Posterior vena cava (tissue), 2 donors: ENCODE measurements at regions of chr5 and their contacts with region 1.

Region 1: DNA sequence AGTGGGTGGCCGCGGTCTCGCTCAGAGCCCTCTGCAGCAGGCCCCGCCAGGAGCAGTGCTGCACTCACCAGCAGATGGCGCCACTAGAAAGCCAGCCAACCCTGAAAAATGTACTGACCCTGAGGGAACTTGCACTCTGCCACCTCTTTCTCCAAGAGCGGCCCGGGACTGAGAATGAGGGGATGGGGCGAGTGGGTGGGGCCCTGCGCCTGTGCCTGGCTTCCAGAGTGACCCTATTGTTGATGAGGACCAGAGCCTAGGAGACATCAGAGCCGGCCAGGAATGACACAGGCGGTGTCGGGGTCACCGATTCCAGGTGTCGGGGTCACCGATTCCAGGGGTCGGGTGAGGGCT is 2.9 kb upstream of the IL17B start:
- DNase-seq: peak; percentile 94

Region 2: DNA sequence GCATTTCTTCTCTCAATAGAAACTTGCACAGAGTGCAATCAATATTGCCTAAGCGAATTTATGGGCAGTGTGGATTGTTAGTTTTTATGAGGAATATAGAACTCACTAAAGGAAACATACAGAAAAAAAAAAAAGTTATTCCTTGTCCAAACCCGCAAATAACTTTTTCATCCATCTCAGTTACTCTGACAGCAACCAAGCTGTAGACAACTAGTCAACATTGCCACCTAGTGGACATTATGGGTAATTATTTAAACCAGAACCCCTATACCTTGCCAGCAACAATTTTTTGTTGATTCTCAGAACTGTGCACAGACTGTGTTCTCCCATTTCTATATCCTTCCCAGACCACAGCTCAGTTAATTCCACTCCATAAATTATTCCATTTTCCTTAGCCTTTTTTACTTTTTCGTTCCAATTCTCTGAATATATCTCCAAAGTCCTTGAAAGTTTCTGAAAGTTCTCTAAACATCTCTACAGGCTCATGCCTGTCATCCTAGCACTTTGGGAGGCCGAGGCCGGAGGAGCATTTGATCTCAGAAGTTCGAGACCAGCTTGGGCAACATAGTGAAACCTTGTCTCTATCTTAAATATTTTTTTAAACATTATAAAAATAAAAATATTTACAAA is 112.9 kb before region 1 on chr5:
- intact Hi-C with region 1: no loop called
- DNase-seq: no peak

Region 3: DNA sequence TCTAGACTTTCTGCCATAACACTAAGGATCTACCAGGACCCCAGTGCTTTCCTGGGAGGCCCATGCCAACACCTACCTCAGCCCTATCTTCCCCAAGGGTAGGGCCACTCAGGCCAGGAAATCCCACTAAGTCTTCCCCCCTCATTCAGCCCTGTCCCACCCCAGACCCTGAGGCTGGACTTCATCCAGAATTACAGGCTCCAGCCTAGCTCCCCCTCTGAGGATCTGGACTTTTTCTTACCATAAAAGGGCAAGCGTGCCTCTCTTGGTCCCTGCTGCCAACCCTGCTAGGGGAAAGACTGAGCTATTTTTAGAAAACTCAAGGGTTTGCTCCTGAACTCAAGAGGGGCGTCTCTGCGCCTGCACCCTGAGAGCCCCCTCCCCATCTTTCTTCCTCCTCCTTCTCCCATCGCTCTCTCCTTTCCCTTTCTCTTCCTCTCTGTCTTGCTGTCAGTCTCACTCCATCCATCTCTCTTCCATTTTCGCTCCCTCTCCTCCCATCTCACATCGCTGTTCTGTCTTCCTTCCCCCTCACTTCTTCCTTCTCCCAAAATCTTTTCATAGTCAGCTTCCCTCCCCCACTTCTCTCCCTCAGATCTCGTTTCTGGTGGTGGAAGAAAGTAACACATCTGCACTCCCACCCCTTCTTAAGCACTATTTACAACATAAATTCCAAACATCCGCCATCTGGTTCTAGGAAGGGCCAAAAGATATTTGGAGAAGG is 35.2 kb after region 1 on chr5:
- intact Hi-C with region 1: loop called in 1 of 2 experiments (anchors 5 kb)
- DNase-seq: peak; percentile 67

Region 4: GRCh38 chr5:149434162-149435014 is 52.4 kb after region 1 on chr5:
- intact Hi-C with region 1: loop called (anchors 2 to 5 kb)
- DNase-seq: no peak

Region 5: GRCh38 chr5:149485655-149486425 is 103.9 kb after region 1 on chr5:
- intact Hi-C with region 1: no loop called
- DNase-seq: peak; percentile 89

Region 6: GRCh38 chr5:150272526-150272925 is 890.6 kb after region 1 on chr5:
- intact Hi-C with region 1: no loop called
- DNase-seq: no peak